GM23248 (cell line): ENCODE measurements at regions of chr17 and their contacts with region 1.

Region 1: GRCh38 chr17:18992454-18993130 is 12.0 kb downstream of the FAM83G start:
- DNase-seq: no peak
- H3K4me3 ChIP-seq: no peak overlapping the region
- H3K27ac ChIP-seq: no peak overlapping the region
- H3K4me1 ChIP-seq: no peaks in the 10 kb centered on the region
- H3K27me3 ChIP-seq: no peaks in the 10 kb centered on the region

Region 2: GRCh38 chr17:18933102-18934058 is 59.2 kb before region 1 on chr17:
- in situ Hi-C with region 1: loop called (anchors 10 kb)
- DNase-seq: no peak
- H3K4me3 ChIP-seq: no peak overlapping the region
- H3K27ac ChIP-seq: no peak overlapping the region
- H3K4me1 ChIP-seq: no peaks in the 10 kb centered on the region
- H3K27me3 ChIP-seq: peaks cover 3% of the 10 kb centered on the region; the same call in 1 of the 2 replicates